ENCODE measurements at regions of chr3 and their contacts with region 1.

Region 1: DNA sequence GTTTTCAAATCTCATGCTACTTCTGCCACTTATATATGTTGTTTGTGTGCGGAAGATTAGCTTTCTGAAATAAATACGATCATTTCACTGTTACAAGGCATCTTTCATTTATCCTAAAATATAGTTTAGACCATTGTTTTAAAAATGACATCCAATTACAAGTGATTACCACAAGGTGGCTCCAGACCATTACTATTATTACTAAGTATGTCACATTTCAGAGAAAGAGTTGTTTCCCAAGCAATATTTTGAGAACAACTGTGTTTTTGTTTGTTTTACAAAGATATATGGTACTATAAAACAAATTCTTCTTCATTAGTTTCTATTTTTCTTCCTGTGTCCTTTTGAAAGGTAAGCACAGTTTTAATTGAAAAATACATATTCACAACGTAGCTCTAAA is 136.0 kb upstream of the RAP2B start:
- DNase-seq: no peak

Region 2: DNA sequence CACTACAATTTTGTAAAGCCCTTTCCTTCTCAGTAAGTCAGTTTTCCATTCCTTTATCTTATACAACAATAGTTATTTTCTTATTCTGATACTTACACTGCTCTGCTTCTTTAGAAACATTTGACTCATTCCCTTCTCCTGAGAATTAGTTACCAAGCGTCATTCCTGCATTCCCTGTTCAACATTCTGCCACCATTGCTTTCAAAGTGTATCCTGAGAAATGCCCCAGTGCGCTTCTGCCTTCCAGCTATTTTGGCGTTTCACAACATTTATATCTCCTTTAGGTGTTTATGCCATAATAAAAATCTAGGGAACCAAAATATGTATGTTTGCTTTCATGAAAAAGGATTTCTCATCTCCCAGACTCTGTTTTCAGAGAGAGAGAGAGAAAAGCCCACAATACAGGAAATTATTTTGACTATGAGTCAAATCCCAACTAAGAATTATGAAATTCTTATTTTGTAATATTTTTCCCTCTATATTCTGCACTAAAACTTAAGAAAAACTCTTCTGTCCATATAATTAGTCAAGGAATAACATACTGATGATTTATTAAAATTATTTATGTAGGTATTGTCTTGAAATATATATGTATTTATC is 17.8 kb after region 1 on chr3:
- intact Hi-C with region 1: no loop called
- DNase-seq: no peak

Region 3: DNA sequence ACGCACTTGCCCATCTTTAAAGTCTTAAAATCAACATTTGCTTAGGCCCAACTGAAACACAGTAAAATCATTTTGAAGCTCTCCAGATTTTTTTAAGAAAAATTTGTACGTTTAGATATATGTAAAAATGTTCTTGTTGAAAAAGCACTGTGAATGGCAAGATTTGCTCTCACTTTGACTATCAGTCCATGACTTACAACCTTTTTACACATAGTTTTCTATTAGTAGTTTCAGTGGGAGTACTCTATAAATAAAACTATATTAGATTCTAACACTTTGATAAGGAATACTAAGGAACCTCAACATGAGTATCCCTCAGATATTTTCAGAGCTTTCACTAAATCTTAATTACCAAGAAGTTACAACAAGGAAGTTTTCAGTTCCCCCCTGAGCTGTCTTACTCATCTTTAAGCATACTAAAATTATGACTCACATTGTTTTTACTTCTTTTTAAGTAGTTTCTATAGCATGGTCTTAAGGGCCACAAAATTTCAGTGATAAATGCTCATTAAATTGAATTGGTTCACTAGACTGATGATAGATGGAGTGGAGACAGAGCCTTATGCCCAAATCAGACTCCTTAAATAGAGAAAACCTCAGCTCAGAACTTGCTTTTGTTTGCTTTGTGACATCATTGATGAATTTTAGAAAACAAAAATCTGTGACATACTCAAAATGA is 104.4 kb after region 1 on chr3:
- intact Hi-C with region 1: no loop called
- DNase-seq: no peak

Region 4: DNA sequence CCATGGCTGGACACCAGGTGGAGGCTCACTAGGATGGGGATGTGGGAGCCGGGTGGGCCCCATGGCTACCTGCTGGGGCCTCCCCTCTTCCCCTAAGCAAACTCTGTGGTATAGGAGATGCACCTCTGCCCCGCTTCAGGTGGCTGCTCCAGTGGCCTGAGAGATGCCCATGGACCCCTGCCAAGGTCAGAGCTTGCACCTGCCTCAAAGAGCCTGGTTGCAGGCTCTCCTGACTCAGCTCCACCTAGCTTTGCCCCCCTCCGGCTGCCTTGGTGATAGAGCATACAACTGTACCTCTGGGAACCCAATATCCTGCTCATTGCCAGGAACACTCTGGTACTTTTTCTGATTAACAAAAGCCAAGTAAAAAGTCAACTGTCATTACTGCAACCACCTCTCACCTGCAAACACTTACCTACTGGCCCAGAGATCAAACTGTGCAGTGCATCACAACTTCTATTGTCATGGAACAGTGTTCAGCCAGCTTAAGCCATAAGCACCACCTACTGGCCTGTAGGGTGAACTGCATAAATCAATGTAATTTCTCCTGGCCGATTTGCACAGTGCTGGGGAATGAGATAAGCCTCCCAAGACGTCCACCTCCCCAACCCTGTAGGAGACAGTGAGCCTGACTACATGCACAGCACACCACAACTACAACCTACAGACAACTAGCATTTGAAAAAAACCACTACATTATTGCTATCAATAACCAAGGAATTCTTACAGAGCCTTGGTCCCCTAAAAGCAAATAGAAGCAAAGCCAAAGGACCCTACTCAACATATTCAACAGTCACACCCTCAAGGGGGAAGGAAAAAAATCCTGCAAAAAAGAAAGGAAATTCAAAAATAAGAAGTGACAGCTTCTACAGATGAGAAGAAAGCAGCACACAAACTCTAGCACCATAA is 742.8 kb after region 1 on chr3:
- intact Hi-C with region 1: loop called (anchors 5 kb)
- DNase-seq: peak in 3 of 10 donors; percentile 19 to 78 (median 23)

Region 5: DNA sequence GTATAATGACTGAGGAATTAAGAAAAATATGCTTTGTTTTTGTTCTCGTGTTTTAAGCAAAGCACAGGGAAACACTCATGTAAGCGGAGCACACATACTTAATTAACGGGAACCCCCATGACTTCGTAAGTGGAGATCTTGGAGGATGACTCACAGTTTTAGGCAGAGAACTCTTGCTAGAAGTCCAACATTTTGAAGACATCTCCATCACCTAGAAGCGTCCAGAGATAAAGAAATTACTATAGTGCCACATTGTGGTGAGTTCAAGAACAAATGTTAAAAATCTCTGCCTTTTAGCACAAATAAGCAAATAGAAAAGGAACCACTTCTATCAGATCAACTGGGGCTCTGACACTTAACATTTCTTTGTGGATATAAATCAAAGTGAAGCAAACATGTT is 901.1 kb after region 1 on chr3:
- intact Hi-C with region 1: loop called (anchors 5 kb)
- DNase-seq: no peak

Region 6: DNA sequence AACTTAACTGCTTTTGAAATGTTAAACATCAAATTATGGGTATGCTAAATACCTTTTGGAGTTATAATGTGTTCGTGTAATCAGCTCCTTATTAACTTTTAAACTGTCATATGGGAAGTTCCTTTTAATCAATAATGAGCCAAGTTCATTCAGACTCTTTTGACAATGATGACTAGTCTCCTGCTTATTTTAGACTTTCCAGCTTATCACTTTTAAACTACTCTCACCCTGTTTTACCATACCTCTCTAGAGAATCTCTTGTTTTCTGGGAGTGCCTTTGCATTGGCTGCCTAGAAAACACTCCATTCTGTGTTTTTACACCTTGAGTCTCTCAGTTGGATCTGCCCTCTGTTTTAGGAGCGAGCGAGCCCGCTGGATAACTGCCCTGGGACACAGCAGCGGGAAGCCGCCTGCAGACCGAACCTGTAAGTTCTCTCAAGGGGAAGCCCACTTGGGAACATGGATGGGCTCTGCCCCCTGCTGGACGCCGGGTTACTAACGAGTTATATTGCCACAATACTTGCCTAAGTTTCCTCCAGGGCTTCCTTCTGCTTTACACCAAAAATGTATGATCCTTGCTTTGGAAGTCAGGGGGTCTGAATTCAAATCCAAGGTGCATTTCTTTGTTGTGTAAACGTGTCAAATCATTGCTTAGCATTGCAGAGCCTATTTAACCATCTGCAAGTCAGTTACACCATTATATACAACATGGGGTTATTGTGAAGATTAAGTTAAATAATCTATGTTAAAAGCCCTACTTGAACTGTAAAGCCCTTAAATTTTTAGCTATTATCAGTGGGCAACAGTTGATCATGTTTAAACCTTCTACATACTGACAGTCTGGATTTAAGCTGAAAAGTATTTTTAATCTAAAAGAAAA is 1227.0 kb after region 1 on chr3:
- intact Hi-C with region 1: loop called (anchors 5 kb)
- DNase-seq: peak; percentile 72 to 99 (median 90)